Activated T-helper 2 cell treated with anti-CD3 and anti-CD28 coated beads, Interferon-gamma antibody, Interleukin-2, Interleukin-4, amounts not matched to agents 10 μg/mL and 5 μg/mL and 100 μg/mL, durations not matched to agents 14 hours and 24 hours and 36 hours (primary cell): ENCODE measurements at regions of chr10 and their contacts with region 1.

Region 1: DNA sequence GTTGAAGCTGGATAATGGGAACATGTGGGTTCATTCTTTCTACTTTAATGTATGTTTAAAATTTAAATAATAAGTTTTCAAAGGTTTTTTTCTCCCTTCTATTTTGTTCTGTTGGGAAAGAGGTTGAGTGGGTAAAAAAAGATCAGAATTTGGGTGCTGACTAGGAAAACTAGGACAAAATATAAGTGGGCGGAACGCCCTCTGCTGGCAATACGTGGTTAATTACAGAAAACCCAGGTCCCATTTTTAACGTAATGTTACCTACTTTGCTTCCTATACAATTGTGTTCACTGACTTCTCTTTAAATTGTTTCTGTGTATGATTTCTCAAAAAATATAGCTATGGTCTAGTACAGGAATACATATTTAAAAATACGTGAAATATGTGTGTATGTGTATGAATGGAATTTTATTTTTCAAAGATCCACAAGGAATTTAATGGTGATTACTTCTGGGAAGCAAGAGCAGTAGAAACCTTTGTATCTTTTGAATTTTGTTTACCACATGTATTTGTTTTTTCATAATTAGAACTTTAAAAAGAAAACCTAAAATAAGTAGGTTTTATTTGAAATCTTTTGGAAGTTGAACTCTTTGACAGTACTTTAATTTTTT is 8.7 kb downstream of the ECD start:
- DNase-seq: peak; percentile 31
- H3K4me3 Mint-ChIP-seq: no peak overlapping the region
- H3K27ac Mint-ChIP-seq: no peak overlapping the region
- H3K4me1 Mint-ChIP-seq: peaks cover 30% of the 10 kb centered on the region
- H3K27me3 Mint-ChIP-seq: no peaks in the 10 kb centered on the region

Region 2: DNA sequence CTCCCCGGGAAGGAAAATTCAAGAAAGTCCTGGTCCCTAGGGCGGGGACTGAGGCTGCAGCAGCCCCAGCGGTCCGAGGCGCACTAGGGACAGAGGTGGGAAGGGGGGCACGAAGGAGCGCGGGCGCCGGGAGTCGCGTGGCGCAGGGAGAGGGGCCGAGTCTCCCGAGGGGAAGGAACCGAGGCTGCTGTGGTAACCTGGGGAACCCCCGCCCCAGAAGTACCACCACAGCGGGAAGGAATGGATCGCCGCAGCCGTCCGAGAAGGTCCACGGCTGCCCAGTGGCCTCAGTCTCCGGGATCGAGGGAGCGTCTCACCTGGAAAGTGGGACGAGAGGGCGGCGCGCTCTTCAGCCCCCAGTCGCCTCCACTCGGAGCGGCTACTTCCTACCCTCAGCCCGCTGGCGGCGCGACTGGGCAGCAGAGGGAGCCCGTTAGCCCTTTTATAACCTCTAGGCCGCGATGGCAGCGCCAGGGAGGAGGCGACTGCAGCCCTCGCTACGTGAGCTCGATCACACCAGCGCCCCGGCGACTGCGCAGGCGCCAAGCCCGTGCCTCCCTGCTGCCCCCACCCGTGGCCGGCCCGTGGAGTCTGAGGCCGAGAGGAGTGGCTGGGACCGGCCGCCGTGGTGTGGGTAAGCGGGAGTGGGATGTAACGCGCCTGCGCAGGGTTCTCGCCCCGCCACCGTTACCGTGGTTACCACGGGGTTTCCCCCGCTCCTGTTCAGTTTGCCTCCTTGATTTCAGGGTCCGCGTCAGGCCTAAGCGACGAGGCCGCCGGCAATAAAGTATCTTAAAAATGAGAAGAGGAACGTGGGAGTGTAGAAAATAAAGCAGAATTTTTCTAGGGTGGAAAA is 62.5 kb before region 1 on chr10 and contains the start of gene P4HA1:
- intact Hi-C with region 1: loop called (anchors 1 kb)
- DNase-seq: peak; percentile 97
- H3K4me3 Mint-ChIP-seq: peak within 1 kb of the TSS; percentile 89
- H3K27ac Mint-ChIP-seq: peak within 1 kb of the TSS; percentile 90
- H3K4me1 Mint-ChIP-seq: peaks cover 31% of the 10 kb centered on the region
- H3K27me3 Mint-ChIP-seq: no peaks in the 10 kb centered on the region
- total RNA-seq, gene P4HA1: 71.9 and 72.8 TPM in 2 replicates

Region 3: DNA sequence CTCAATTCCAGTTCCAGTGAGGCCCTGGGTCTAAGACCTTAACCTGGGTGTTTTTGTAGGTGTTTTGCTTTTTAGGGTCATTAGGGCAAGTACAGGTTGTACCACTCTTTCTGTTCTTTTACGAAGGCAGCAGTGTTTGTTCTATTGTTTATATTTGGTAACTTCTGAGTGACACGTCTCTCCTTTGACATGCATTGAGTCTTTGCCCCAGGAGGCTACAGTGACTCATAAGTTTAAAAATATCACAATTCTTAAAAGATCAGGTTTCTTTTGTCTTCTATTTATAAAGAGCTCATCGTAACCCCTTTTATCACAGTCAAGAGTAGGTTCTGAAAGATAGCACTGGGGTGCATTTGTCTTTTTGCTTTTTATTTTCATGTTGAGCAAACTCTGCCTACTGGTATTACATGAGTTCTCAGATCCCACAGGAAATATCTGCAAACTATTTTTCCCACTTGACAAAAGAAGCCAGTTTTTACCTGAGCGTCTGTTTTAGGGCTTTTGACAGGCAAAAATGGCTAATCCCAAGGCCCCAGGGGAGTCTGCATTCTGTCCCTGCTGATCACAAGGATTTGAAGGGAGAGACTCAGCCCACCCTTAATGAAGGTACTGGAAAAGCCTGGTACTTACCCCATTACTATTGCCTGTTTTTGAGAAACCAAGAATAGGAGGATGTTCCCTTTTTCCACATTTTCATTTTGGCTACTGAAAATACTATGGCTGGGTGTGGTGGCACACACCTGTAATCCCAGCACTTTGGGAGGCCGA is 41.0 kb before region 1 on chr10:
- intact Hi-C with region 1: loop called (anchors 1 kb)
- DNase-seq: no peak
- H3K4me3 Mint-ChIP-seq: no peak overlapping the region
- H3K27ac Mint-ChIP-seq: no peak overlapping the region
- H3K4me1 Mint-ChIP-seq: peaks cover 9% of the 10 kb centered on the region
- H3K27me3 Mint-ChIP-seq: no peaks in the 10 kb centered on the region

Region 4: DNA sequence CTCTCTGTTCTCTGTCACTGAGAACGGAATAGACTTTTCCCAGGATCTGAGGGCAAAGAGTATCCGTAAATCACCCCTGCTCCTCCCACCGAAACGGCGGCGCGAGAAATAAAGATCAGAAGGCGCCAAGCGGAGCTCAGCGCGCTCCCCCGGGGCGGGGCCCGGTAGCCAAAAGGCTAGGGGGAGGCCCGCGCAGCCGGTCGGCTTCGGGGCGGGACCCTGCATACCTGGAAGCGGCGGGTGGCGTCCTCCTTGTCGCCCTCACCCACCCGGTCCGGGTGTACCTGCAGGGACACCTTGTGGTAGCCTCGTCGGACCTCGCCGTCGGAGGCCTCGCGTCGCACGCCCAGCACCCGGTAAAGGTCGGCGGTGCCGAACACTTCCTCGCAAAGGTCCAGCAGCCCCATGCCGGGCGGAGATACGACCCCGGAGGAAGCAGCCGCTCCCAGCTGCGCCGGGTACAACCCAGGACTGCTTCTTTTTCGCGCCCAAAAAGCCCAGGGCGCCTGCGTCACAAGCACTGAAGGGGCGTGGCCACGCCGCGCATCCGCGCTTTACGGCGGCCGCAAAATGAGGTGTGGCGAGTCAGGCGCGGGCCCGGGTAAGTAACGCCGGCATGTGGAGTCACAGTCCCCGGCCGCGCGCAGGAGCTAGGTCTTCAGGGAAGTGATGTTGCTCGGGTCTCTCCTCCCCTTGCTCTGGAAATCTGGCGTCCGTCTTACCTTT is 87.8 kb after region 1 on chr10 and contains the start of gene DNAJC9:
- intact Hi-C with region 1: no loop called
- DNase-seq: peak; percentile 96
- H3K4me3 Mint-ChIP-seq: peak within 1 kb of the TSS; percentile 99
- H3K27ac Mint-ChIP-seq: peak within 1 kb of the TSS; percentile 95
- H3K4me1 Mint-ChIP-seq: peaks cover 62% of the 10 kb centered on the region
- H3K27me3 Mint-ChIP-seq: no peaks in the 10 kb centered on the region
- total RNA-seq, gene DNAJC9: 50.8 and 52.7 TPM in 2 replicates